Prostate gland (tissue), 2 donors: ENCODE measurements at regions of chr2 and their contacts with region 1.

Region 1: GRCh38 chr2:168530982-168531622 is 75.0 kb downstream of the CERS6 start:
- DNase-seq: no peak
- H3K4me3 ChIP-seq: no peak overlapping the region
- H3K27ac ChIP-seq: no peak overlapping the region
- H3K4me1 ChIP-seq: peaks cover 4% of the 10 kb centered on the region
- H3K27me3 ChIP-seq: no peaks in the 10 kb centered on the region
- CTCF ChIP-seq: no peak
- POLR2A ChIP-seq: no peak

Region 2: DNA sequence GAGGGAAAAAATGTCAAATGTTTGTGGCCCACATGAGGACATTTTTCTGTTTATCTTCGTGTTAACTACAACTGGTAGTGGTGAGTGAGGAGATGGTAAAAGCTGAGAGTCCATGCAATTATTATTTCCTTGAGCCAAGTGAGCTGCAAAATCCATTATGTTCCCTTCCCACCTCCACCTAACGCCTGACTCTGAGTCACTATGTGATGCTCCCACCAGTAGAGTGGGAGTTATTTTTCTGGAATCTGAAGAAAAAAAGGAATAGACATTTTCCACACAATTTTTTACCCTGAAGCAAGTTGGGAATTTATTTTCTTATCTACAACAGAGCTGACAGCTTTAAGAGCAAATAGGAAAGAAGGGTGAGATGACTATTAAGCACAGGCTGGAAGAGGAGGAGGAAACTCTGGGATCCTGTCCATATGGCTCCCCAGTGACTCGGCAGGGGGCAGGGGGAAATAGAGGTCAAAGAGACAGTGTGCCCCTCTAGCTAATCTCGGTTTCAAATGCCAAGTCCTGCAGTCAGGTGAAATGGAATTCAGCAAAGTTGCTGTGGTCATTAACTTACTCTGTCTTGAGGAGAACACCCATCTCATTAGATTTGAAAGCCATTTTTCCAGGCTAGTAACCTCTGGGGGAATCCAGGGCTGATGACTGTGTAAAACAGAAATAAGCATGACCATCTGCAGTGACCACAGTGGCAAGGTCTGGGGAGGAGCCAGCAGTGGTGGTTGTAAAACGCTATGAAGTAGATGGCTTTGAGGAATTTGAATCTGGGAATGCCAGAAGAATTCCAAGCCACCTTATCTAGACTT is 747.6 kb before region 1 on chr2:
- intact Hi-C with region 1: no loop called
- DNase-seq: no peak
- H3K4me3 ChIP-seq: no peak overlapping the region
- H3K27ac ChIP-seq: no peak overlapping the region
- H3K4me1 ChIP-seq: no peaks in the 10 kb centered on the region
- H3K27me3 ChIP-seq: no peaks in the 10 kb centered on the region
- CTCF ChIP-seq: no peak
- POLR2A ChIP-seq: no peak

Region 3: GRCh38 chr2:168432565-168433186 is 98.4 kb before region 1 on chr2:
- intact Hi-C with region 1: no loop called
- DNase-seq: no peak
- H3K4me3 ChIP-seq: no peak overlapping the region
- H3K27ac ChIP-seq: no peak overlapping the region
- H3K4me1 ChIP-seq: no peaks in the 10 kb centered on the region
- H3K27me3 ChIP-seq: no peaks in the 10 kb centered on the region
- CTCF ChIP-seq: no peak
- POLR2A ChIP-seq: no peak

Region 4: DNA sequence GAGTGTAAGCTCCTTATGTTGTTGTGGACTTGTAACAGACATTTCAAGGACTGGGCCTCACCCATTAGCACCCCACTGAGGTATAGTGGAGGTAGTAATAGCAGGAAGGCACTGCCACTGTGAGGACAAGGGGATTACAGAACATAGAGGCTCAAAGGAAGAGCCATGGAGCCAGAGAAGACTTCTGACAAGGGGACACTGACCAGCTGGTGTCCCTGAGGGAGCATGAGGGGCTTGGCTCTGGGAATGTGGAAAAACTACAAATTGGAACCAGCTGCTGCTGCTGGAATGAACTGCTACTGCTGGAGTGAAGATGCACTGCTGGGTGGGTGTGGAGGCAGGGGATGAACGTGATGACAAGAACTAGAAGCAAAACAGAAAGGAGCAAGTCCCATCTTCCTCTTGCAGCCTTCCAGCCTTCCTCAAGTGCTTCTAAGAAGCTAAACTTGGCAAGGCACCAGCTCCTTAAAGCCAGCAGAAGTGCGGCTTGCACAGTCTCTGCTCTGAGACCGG is 104.0 kb after region 1 on chr2:
- intact Hi-C with region 1: loop called (anchors 5 kb)
- DNase-seq: no peak
- H3K4me3 ChIP-seq: no peak overlapping the region
- H3K27ac ChIP-seq: peak overlapping the region in 1 of 2 donors; percentile 30
- H3K4me1 ChIP-seq: no peaks in the 10 kb centered on the region
- H3K27me3 ChIP-seq: no peaks in the 10 kb centered on the region
- CTCF ChIP-seq: no peak
- POLR2A ChIP-seq: no peak

Region 5: DNA sequence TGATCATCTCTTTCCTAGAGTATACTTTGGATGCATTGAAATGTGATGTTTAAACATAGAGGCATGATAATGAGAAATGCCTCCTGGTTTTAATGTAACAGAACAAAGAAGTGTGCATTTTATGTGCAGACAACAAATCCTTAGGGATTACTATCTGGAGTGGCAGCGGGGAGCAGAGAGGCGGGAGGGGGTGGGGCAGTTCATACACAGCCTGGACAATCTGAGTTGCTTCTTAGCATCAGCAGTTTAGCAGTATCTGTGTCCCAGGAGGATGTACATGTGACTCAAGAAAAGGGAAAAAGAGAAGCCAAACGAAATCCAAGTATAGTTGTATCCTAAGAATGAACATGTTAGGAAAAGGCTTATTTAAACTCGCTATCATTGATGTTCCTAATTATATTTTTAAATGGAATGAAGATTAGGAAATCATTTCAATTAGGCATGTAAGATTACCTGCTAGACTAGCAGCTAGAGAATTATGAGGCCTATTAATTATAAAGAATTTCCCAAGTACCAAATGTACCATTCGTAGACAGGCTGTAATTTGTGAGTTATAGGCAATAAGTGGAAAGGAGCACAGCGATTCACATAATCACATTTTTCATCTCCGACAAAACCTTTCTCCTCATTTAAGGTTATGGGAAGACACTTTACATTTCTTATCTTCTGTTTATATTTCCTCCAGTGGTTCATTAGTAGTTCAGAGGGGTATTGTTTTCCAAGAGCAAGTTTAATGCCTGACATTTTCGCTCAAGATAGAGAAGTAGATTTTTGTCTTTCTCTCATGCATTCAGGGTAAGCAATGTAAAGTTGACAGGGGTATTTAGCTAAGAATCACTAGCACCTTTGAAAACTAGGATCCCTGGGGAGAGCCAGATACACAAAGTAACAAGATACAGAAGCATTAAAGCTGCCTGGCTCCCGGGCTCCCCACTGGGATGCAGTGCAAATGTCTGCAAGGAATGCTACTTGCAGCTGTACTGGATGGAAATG is 130.1 kb after region 1 on chr2:
- intact Hi-C with region 1: loop called (anchors 10 kb)
- DNase-seq: no peak
- H3K4me3 ChIP-seq: no peak overlapping the region
- H3K27ac ChIP-seq: no peak overlapping the region
- H3K4me1 ChIP-seq: no peaks in the 10 kb centered on the region
- H3K27me3 ChIP-seq: no peaks in the 10 kb centered on the region
- CTCF ChIP-seq: no peak
- POLR2A ChIP-seq: no peak